B cell (primary cell): ENCODE measurements at regions of chr5 and their contacts with region 1.

Region 1: DNA sequence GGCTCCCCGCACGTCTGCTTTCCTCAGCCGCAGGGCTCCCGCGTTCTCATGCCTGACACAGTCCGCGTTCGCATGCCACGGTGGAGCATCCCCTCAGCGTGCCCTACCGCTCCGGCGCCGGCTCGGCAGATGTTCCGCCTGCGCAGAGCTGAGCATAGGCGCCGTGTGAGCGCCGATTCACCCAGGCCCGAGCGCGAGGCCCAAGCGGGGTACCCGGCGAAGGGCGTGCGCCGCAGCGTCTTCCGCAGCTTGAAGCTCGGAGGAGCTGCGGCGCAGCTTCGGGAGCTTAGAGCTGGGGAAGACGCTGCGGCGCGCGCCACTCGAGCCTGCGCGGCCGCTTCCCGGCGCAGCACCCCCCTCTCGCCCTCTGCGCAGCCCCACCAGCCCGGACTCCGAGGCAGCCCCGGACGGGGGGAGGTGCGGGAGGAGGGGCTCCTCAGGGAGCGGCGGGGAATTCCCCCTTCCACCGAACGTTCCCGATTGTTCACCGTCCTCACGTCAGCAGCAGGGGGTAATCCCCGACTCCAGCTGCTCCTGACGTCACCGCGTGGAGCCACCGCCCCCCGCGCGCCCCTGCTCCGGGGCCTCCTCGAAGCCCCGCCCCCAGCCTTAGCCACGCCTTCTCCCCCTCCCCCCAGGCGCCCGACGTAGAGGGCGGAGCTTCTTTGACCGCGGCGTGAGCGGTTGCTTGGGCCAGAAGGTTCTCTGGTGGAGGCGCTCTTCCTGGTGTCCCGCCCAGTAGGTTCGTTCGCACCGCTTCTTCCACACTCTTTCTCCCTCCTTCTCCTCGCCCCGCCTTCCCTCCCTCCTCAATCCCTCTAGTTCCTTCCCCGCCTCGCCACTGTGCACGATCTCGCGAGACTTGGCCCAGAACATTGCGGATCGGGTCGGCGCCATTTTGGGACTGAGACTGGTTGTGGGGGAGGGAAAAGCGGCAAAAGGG is at the start of gene GPBP1:
- DNase-seq: peak; percentile 99
- ATAC-seq: peak; percentile 76
- H3K4me3 ChIP-seq: peak within 1 kb of the TSS; percentile 87 to 100 (median 97)
- H3K4me3 Mint-ChIP-seq: peak within 1 kb of the TSS; percentile 97
- H3K27ac ChIP-seq: peak within 1 kb of the TSS; percentile 98 to 100
- H3K27ac Mint-ChIP-seq: peak within 1 kb of the TSS; percentile 98
- H3K4me1 ChIP-seq: peaks cover 42 to 46% of the 10 kb centered on the region in 2 donors
- H3K4me1 Mint-ChIP-seq: peaks cover 38% of the 10 kb centered on the region
- H3K27me3 ChIP-seq: no peaks in the 10 kb centered on the region
- H3K27me3 Mint-ChIP-seq: no peaks in the 10 kb centered on the region
- CTCF ChIP-seq: no peak
- total RNA-seq, gene GPBP1: 152 and 159 TPM in 2 replicates

Region 2: GRCh38 chr5:55711968-55712859 is 1461.2 kb before region 1 on chr5 and contains the start of gene SLC38A9:
- CTCF ChIA-PET with region 1: no interaction called
- POLR2A ChIA-PET with region 1: no interaction called
- intact Hi-C with region 1: loop called (anchors 5 kb)
- DNase-seq: peak; percentile 93
- ATAC-seq: peak; percentile 100
- H3K4me3 ChIP-seq: peak within 1 kb of the TSS; percentile 80 to 96 (median 94)
- H3K4me3 Mint-ChIP-seq: peak within 1 kb of the TSS; percentile 100
- H3K27ac ChIP-seq: peak within 1 kb of the TSS; percentile 49 to 74
- H3K27ac Mint-ChIP-seq: peak within 1 kb of the TSS; percentile 93
- H3K4me1 ChIP-seq: peaks cover 11 to 19% of the 10 kb centered on the region in 2 donors
- H3K4me1 Mint-ChIP-seq: peaks cover 19% of the 10 kb centered on the region
- H3K27me3 ChIP-seq: no peaks in the 10 kb centered on the region
- H3K27me3 Mint-ChIP-seq: no peaks in the 10 kb centered on the region
- CTCF ChIP-seq: no peak
- total RNA-seq, gene SLC38A9: 36.3 and 43.5 TPM in 2 replicates

Region 3: GRCh38 chr5:56670118-56670483 is 503.4 kb before region 1 on chr5:
- CTCF ChIA-PET with region 1: no interaction called
- POLR2A ChIA-PET with region 1: no interaction called
- intact Hi-C with region 1: loop called (anchors 10 kb)
- DNase-seq: peak; percentile 95
- ATAC-seq: no peak
- H3K4me3 ChIP-seq: no peak overlapping the region
- H3K4me3 Mint-ChIP-seq: peak overlapping the region; percentile 75
- H3K27ac ChIP-seq: peak overlapping the region; percentile 97 to 98
- H3K27ac Mint-ChIP-seq: peak overlapping the region; percentile 97
- H3K4me1 ChIP-seq: peaks cover 58% of the 10 kb centered on the region in 2 donors
- H3K4me1 Mint-ChIP-seq: peaks cover 74% of the 10 kb centered on the region
- H3K27me3 ChIP-seq: no peaks in the 10 kb centered on the region
- H3K27me3 Mint-ChIP-seq: no peaks in the 10 kb centered on the region
- CTCF ChIP-seq: no peak

Region 4: DNA sequence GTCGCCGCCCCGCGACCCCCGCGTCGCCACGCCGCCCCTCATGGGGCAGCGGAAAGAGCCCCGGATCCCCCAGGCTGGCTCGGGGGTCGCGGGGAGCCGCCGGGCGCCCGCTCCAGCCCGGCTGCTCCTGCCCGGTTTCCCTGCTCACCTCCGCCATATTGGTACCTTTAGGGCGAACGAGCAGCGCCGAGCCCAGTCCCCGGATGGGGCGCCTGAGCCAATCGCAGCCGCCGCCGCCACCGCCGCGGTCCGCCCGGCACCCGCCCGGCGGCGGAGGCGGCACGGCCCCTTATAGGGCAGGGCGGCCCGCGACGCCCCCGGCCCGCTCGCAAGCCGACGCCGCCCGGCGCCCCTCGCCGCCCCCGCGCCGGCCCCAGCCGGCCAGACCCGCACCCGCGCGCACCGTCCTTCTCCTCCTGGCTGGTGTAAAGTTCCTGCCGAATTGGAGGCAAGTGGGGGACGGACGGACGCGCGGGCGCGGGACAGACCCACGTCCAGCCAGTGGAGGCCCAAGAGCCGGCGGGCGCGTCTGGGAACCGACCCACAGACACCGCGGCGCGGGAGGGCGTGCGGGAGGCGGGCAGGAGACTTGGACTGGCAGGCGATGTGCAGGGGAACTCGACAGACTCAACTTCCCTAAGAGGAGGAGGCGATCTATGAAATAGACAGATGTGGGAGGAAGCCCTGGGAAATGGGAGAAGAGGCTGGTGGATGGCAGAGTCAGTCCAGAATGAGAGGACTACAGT is 221.3 kb before region 1 on chr5 and contains the start of gene MIER3:
- CTCF ChIA-PET with region 1: no interaction called
- POLR2A ChIA-PET with region 1: interaction called, 7 read pairs
- intact Hi-C with region 1: loop called (anchors 1 kb)
- DNase-seq: peak; percentile 84
- ATAC-seq: peak; percentile 91
- H3K4me3 ChIP-seq: peak within 1 kb of the TSS; percentile 38 to 77 (median 72)
- H3K4me3 Mint-ChIP-seq: peak within 1 kb of the TSS; percentile 97
- H3K27ac ChIP-seq: peak within 1 kb of the TSS in 1 of 2 donors; percentile 59
- H3K27ac Mint-ChIP-seq: peak within 1 kb of the TSS; percentile 88
- H3K4me1 ChIP-seq: peaks cover 17 to 19% of the 10 kb centered on the region in 2 donors
- H3K4me1 Mint-ChIP-seq: peaks cover 25% of the 10 kb centered on the region
- H3K27me3 ChIP-seq: peaks cover 0 to 5% (median 1%) of the 10 kb centered on the region in 4 experiments
- H3K27me3 Mint-ChIP-seq: peaks cover 11% of the 10 kb centered on the region
- CTCF ChIP-seq: no peak
- total RNA-seq, gene MIER3: 23.2 and 25.9 TPM in 2 replicates

Region 5: DNA sequence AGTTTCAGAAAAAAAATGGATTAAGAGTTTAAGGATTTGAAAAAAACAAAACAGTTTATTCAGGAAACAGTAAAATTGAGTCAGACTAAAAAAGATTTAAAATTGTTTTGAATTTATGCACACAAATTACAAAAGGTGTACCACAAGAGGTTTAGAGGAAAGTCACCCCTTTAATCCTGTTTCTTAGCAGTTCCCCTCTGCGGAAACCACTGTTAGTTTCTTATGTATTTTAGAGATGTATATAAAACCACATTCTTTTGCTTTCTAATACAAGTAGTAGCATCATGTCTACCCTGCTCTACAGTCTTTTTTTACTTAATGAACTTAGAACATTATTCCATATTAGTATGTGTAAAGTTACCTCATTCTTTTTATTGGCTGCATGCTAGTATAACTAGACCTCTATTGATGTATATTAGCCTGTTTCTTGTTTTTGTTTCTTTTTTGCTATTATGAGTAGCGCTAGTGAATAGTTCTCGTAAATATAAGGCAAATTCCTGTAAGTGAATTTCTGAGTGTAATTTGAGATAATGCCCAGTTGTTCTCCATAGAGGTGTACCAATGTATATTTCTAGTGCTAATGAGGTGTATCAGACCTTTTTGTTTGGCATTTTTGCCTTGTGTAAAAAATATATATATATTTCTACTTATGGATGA is 20.4 kb after region 1 on chr5:
- CTCF ChIA-PET with region 1: interaction called, 5 read pairs
- POLR2A ChIA-PET with region 1: no interaction called
- intact Hi-C with region 1: loop called (anchors 2 kb)
- DNase-seq: no peak
- ATAC-seq: no peak
- H3K4me3 ChIP-seq: no peak overlapping the region
- H3K4me3 Mint-ChIP-seq: no peak overlapping the region
- H3K27ac ChIP-seq: no peak overlapping the region
- H3K27ac Mint-ChIP-seq: no peak overlapping the region
- H3K4me1 ChIP-seq: peaks cover 9 to 10% of the 10 kb centered on the region in 2 donors
- H3K4me1 Mint-ChIP-seq: peaks cover 50% of the 10 kb centered on the region
- H3K27me3 ChIP-seq: no peaks in the 10 kb centered on the region
- H3K27me3 Mint-ChIP-seq: no peaks in the 10 kb centered on the region
- CTCF ChIP-seq: no peak

Region 6: GRCh38 chr5:58460732-58461286 is 1287.4 kb after region 1 on chr5:
- CTCF ChIA-PET with region 1: interaction called, 3 read pairs
- POLR2A ChIA-PET with region 1: no interaction called
- intact Hi-C with region 1: loop called (anchors 2 kb)
- DNase-seq: peak; percentile 93
- ATAC-seq: peak; percentile 60
- H3K4me3 ChIP-seq: peak overlapping the region in 4 of 5 experiments; percentile 67 to 88 (median 78)
- H3K4me3 Mint-ChIP-seq: peak overlapping the region; percentile 87
- H3K27ac ChIP-seq: peak overlapping the region; percentile 87 to 93
- H3K27ac Mint-ChIP-seq: peak overlapping the region; percentile 93
- H3K4me1 ChIP-seq: peaks cover 10 to 13% of the 10 kb centered on the region in 2 donors
- H3K4me1 Mint-ChIP-seq: peaks cover 13% of the 10 kb centered on the region
- H3K27me3 ChIP-seq: peaks cover 0 to 7% (median 3%) of the 10 kb centered on the region in 4 experiments
- H3K27me3 Mint-ChIP-seq: peaks cover 3% of the 10 kb centered on the region
- CTCF ChIP-seq: peak; percentile 83